ENCODE measurements at regions of chr19 and their contacts with region 1.

Region 1: GRCh38 chr19:45485305-45486077 is 11.4 kb downstream of the RTN2 start:
- DNase-seq: peak; percentile 85
- H3K4me3 ChIP-seq: peak overlapping the region; percentile 56 to 66 (median 61)
- H3K27ac ChIP-seq: peak overlapping the region; percentile 19
- H3K4me1 ChIP-seq: no peaks in the 10 kb centered on the region
- H3K27me3 ChIP-seq: no peaks in the 10 kb centered on the region
- CTCF ChIP-seq: peak; percentile 79 to 96
- POLR2A ChIP-seq: no peak

Region 2: DNA sequence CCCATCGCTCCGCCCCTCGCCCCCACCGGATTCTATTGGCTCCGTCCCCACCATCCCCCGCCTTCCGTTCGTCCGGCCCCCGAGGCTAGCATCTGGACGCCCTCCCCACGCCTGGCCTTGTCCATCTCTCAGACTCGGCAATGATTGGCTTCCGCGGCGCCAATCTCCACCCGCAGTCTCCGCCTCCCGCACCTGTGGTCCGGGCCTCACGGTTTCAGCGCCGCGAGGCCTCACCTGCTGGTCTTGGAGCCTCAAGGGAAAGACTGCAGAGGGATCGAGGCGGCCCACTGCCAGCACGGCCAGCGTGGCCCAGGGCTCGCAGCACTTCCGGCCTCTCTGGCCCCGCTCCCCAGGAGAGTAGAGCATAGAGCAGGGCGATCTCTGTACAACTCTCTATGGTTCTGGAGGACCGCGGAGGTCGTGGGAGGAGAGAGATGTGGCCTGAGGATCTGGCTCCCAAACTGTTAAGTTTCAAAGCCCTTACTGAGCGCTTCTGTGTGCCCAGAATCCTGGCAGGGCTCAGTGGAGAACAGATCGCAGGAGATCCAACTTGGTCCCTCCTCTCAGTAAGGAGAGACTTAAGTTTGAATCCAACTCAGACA is 61.8 kb before region 1 on chr19 and contains the start of gene ERCC1:
- CTCF ChIA-PET with region 1: interaction called, 15 read pairs
- POLR2A ChIA-PET with region 1: no interaction called
- dilution Hi-C with region 1: no loop called
- intact Hi-C with region 1: no loop called
- DNase-seq: peak; percentile 94
- H3K4me3 ChIP-seq: peak within 1 kb of the TSS; percentile 59 to 74 (median 73)
- H3K27ac ChIP-seq: peak within 1 kb of the TSS; percentile 100
- H3K4me1 ChIP-seq: peaks cover 30% of the 10 kb centered on the region
- H3K27me3 ChIP-seq: no peaks in the 10 kb centered on the region
- CTCF ChIP-seq: no peak
- POLR2A ChIP-seq: peak; percentile 61
- total RNA-seq, gene ERCC1: 81.8 and 82.6 TPM in 2 replicates

Region 3: GRCh38 chr19:45469132-45469944 is 16.2 kb before region 1 on chr19:
- CTCF ChIA-PET with region 1: interaction called, 31 read pairs
- POLR2A ChIA-PET with region 1: no interaction called
- dilution Hi-C with region 1: no loop called
- intact Hi-C with region 1: no loop called
- DNase-seq: peak; percentile 95
- H3K4me3 ChIP-seq: peak overlapping the region; percentile 45 to 71 (median 48)
- H3K27ac ChIP-seq: peak overlapping the region; percentile 86
- H3K4me1 ChIP-seq: peaks cover 18% of the 10 kb centered on the region
- H3K27me3 ChIP-seq: no peaks in the 10 kb centered on the region
- CTCF ChIP-seq: no peak
- POLR2A ChIP-seq: no peak

Region 4: GRCh38 chr19:45506246-45506990 is 20.9 kb after region 1 on chr19:
- CTCF ChIA-PET with region 1: interaction called, 12 read pairs
- POLR2A ChIA-PET with region 1: no interaction called
- dilution Hi-C with region 1: no loop called
- intact Hi-C with region 1: loop called (anchors 2 kb)
- DNase-seq: peak; percentile 88
- H3K4me3 ChIP-seq: peak overlapping the region; percentile 92 to 100 (median 96)
- H3K27ac ChIP-seq: peak overlapping the region; percentile 69
- H3K4me1 ChIP-seq: peaks cover 23% of the 10 kb centered on the region
- H3K27me3 ChIP-seq: no peaks in the 10 kb centered on the region
- CTCF ChIP-seq: peak; percentile 36 to 64
- POLR2A ChIP-seq: peak; percentile 71

Region 5: GRCh38 chr19:45848922-45849321 is 363.4 kb after region 1 on chr19:
- CTCF ChIA-PET with region 1: no interaction called
- POLR2A ChIA-PET with region 1: no interaction called
- dilution Hi-C with region 1: no loop called
- intact Hi-C with region 1: no loop called
- DNase-seq: no peak
- H3K4me3 ChIP-seq: no peak overlapping the region
- H3K27ac ChIP-seq: no peak overlapping the region
- H3K4me1 ChIP-seq: no peaks in the 10 kb centered on the region
- H3K27me3 ChIP-seq: no peaks in the 10 kb centered on the region
- CTCF ChIP-seq: peak in 1 of 2 donors; percentile 22
- POLR2A ChIP-seq: no peak

Measured in endothelial cell of umbilical vein (primary cell).